ENCODE measurements at regions of chr13 and their contacts with region 1.

Region 1: GRCh38 chr13:103883164-103883563 is 816.9 kb upstream of the SLC10A2 start:
- DNase-seq: peak; percentile 95
- H3K4me3 ChIP-seq: no peak overlapping the region
- H3K27ac ChIP-seq: peak overlapping the region; percentile 88
- H3K4me1 ChIP-seq: peaks cover 12% of the 10 kb centered on the region
- H3K27me3 ChIP-seq: no peaks in the 10 kb centered on the region
- CTCF ChIP-seq: peak; percentile 60 to 80
- POLR2A ChIP-seq: no peak

Region 2: GRCh38 chr13:103948426-103948825 is 65.3 kb after region 1 on chr13:
- CTCF ChIA-PET with region 1: interaction called, 3 read pairs
- POLR2A ChIA-PET with region 1: no interaction called
- dilution Hi-C with region 1: no loop called
- intact Hi-C with region 1: loop called (anchors 1 kb)
- DNase-seq: peak; percentile 92
- H3K4me3 ChIP-seq: no peak overlapping the region
- H3K27ac ChIP-seq: peak overlapping the region; percentile 84
- H3K4me1 ChIP-seq: peaks cover 48% of the 10 kb centered on the region
- H3K27me3 ChIP-seq: no peaks in the 10 kb centered on the region
- CTCF ChIP-seq: no peak
- POLR2A ChIP-seq: peak; percentile 38

Region 3: GRCh38 chr13:104015646-104016396 is 132.7 kb after region 1 on chr13:
- CTCF ChIA-PET with region 1: interaction called, 5 read pairs
- POLR2A ChIA-PET with region 1: no interaction called
- dilution Hi-C with region 1: no loop called
- intact Hi-C with region 1: loop called (anchors 1 kb)
- DNase-seq: peak; percentile 89
- H3K4me3 ChIP-seq: no peak overlapping the region
- H3K27ac ChIP-seq: peak overlapping the region; percentile 74
- H3K4me1 ChIP-seq: peaks cover 23% of the 10 kb centered on the region
- H3K27me3 ChIP-seq: no peaks in the 10 kb centered on the region
- CTCF ChIP-seq: no peak
- POLR2A ChIP-seq: no peak

Region 4: DNA sequence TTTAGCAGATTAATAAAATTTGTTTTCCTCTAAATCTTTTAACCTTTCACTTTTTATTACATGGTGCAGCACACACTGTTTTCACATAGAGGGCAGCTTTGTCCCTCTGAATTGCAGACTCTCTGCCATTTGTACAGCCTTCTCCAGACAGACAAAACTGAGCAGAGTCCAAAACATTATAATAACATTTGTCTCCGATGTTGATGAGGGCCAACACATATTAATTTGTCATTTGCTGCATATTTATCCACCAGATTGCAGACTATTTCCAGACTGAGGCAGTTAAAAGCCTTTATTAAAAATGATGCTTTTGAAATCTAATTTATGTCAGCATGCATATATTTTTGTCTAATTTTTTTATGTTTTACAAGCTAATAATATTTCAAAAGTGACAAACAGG is 435.0 kb after region 1 on chr13:
- CTCF ChIA-PET with region 1: interaction called, 6 read pairs
- POLR2A ChIA-PET with region 1: no interaction called
- dilution Hi-C with region 1: no loop called
- intact Hi-C with region 1: loop called (anchors 1 kb)
- DNase-seq: peak; percentile 43
- H3K4me3 ChIP-seq: no peak overlapping the region
- H3K27ac ChIP-seq: no peak overlapping the region
- H3K4me1 ChIP-seq: peaks cover 14% of the 10 kb centered on the region
- H3K27me3 ChIP-seq: no peaks in the 10 kb centered on the region
- CTCF ChIP-seq: peak; percentile 27 to 38
- POLR2A ChIP-seq: no peak

Region 5: DNA sequence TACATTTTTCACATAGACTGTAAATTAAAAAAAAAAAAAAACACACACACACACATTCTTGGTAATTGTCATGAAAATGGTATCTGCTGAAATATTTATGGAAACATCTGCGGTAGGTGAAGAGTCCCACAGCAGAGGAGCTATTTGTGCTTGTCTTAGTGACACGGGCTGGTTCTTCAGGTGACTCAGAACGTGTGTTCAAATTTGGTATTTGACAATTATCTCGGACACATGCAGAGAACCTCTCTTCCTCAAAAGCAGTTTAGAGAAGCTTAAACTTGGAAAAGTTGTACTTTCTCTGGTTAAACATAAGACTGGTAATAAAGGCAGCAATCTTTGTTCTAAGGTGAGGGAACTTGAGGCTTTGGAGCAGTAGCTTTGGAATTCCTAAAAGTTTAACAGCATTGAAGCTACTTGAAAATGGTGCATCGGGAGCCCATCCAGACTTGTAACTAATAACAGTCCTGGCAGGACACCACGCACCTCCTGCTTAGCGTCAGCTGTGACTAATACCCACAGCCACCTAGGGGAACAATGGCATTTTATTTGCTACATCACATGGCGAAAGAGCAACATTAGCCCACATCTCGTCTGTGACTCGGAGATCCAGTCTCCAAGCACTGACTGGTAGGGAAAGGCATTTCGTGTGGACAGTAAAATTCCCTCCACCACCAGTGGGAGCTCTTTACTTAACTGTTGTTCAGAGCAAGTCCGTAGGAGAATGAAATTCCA is 688.2 kb after region 1 on chr13:
- CTCF ChIA-PET with region 1: interaction called, 11 read pairs
- POLR2A ChIA-PET with region 1: no interaction called
- dilution Hi-C with region 1: no loop called
- intact Hi-C with region 1: loop called (anchors 1 kb)
- DNase-seq: peak; percentile 89
- H3K4me3 ChIP-seq: no peak overlapping the region
- H3K27ac ChIP-seq: peak overlapping the region; percentile 4
- H3K4me1 ChIP-seq: no peaks in the 10 kb centered on the region
- H3K27me3 ChIP-seq: no peaks in the 10 kb centered on the region
- CTCF ChIP-seq: peak; percentile 73 to 76
- POLR2A ChIP-seq: no peak

Region 6: GRCh38 chr13:105196052-105196451 is 1312.9 kb after region 1 on chr13:
- CTCF ChIA-PET with region 1: no interaction called
- POLR2A ChIA-PET with region 1: no interaction called
- dilution Hi-C with region 1: no loop called
- intact Hi-C with region 1: loop called (anchors 1 kb)
- DNase-seq: peak; percentile 88
- H3K4me3 ChIP-seq: no peak overlapping the region
- H3K27ac ChIP-seq: peak overlapping the region; percentile 69
- H3K4me1 ChIP-seq: peaks cover 9% of the 10 kb centered on the region
- H3K27me3 ChIP-seq: no peaks in the 10 kb centered on the region
- CTCF ChIP-seq: no peak
- POLR2A ChIP-seq: no peak